ENCODE measurements at regions of chr11 and their contacts with region 1.

Region 1: GRCh38 chr11:66855574-66856495 is 1.0 kb upstream of the LRFN4 start:
- DNase-seq: peak; percentile 97
- H3K4me3 Mint-ChIP-seq: peak overlapping the region; percentile 95
- H3K27ac Mint-ChIP-seq: peak overlapping the region; percentile 97
- H3K4me1 Mint-ChIP-seq: peaks cover 11% of the 10 kb centered on the region
- H3K27me3 Mint-ChIP-seq: no peaks in the 10 kb centered on the region

Region 2: DNA sequence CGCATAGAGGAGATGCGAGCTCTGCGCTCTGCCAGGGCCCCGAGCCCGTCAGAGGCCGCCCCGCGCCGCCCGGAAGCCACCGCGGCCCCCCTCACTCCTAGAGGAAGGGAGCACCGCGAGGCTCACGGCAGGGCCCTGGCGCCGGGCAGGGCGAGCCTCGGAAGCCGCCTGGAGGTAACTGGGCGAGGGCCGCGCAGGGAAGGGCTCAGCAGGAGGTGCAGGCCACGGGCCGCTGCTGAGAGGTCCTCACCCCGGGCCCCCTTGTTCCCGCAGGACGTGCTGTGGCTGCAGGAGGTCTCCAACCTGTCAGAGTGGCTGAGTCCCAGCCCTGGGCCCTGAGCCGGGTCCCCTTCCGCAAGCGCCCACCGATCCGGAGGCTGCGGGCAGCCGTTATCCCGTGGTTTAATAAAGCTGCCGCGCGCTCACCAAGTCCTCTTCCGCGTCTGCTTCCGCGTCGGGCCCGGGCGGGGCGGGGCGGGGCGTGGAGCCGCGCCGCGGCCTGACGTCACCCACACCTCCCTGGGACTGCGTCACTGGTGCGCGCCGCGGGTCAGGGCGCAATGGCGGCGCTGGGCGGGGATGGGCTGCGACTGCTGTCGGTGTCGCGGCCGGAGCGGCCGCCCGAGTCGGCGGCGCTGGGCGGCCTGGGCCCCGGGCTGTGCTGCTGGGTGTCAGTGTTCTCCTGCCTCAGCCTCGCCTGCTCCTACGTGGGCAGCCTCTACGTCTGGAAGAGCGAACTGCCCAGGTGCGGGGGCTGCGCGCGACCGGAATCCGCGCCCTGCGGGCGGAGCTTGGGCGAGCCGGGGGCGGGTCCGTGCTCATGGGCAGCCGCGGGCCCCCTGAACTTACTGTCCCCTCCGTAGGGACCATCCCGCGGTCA is 12.7 kb before region 1 on chr11 and contains the start of gene RCE1:
- intact Hi-C with region 1: loop called (anchors 1 kb)
- DNase-seq: peak; percentile 98
- H3K4me3 Mint-ChIP-seq: peak within 1 kb of the TSS; percentile 91
- H3K27ac Mint-ChIP-seq: peak within 1 kb of the TSS; percentile 96
- H3K4me1 Mint-ChIP-seq: peaks cover 42% of the 10 kb centered on the region
- H3K27me3 Mint-ChIP-seq: no peaks in the 10 kb centered on the region
- total RNA-seq, gene RCE1: 28.5 and 32.9 TPM in 2 replicates

Measured in activated CD4-positive, alpha-beta T cell treated with anti-CD3 and anti-CD28 coated beads, Interleukin-2, amount 10 ng/mL, durations not matched to agents 24 days and 14 days (primary cell).